Prostate gland (tissue), 2 donors: ENCODE measurements at regions of chr11 and their contacts with region 1.

Region 1: DNA sequence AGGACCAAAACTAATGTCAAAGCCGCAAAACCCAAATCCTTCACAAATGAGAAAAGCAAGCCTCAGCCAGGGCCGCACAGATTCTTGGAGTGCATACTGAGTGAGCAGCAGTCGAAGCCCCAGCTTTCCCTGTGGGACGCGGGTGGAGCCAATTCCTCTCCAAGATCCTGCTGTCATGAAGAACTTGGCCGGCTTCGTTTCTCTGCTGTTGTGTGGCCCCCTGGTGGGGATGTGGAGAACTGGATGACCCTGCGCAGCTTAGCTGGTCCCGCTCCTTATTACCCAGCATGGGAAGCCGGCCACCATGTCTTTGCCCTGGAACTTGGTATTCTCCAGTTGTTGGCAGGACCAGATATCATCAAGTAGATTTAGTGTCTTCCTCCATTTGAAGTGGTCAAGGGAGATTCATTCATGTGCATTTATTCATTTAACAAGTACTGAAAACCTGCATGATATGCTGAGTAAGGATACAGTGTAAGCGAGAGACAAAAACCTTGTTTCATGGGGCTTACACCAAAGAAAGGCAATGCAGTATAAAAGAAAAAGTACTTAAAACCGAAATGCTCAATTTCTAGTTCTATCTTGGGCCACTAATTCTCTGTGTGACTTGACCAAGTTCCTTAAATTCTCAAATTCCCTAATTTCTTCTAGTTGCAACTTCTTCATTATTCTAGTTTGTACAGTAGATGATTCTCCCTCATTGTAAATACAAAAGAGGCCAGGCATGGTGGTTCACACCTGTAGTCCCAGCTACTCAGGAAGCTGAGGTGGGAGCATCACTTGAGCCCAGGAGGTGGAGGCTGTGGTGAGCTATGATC is 56.7 kb upstream of the CRTAM start:
- DNase-seq: peak; percentile 81
- H3K4me3 ChIP-seq: no peak overlapping the region
- H3K27ac ChIP-seq: no peak overlapping the region
- H3K4me1 ChIP-seq: no peaks in the 10 kb centered on the region
- H3K27me3 ChIP-seq: no peaks in the 10 kb centered on the region
- CTCF ChIP-seq: peak; percentile 87 to 93 (median 90)
- POLR2A ChIP-seq: no peak

Region 2: DNA sequence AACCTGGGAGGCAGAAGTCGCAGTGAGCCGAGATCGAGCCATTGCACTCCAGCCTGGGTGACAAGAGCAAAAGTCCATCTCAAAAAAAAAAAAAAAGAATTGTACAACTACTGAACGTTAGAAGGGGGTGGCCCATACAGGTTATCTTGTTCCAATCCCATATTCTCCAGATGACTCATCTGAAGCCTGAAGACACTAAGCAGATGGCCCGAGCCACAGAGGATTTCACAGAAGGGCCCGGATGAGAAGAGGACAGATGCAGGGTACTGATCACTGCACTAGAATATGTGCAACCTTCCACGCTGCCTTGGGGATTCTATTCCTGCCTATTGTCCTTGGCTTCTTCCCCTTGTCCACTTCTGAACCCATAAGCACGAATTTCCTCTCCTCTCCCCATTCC is 196.9 kb before region 1 on chr11:
- intact Hi-C with region 1: loop called (anchors 5 kb)
- DNase-seq: no peak
- H3K4me3 ChIP-seq: no peak overlapping the region
- H3K27ac ChIP-seq: no peak overlapping the region
- H3K4me1 ChIP-seq: no peaks in the 10 kb centered on the region
- H3K27me3 ChIP-seq: no peaks in the 10 kb centered on the region
- CTCF ChIP-seq: no peak
- POLR2A ChIP-seq: no peak

Region 3: GRCh38 chr11:122633219-122633829 is 148.3 kb before region 1 on chr11:
- intact Hi-C with region 1: loop called (anchors 2 kb)
- DNase-seq: no peak
- H3K4me3 ChIP-seq: no peak overlapping the region
- H3K27ac ChIP-seq: no peak overlapping the region
- H3K4me1 ChIP-seq: no peaks in the 10 kb centered on the region
- H3K27me3 ChIP-seq: no peaks in the 10 kb centered on the region
- CTCF ChIP-seq: peak in 2 of 4 experiments; percentile 30 to 36
- POLR2A ChIP-seq: no peak

Region 4: GRCh38 chr11:122727101-122727929 is 54.3 kb before region 1 on chr11:
- intact Hi-C with region 1: no loop called
- DNase-seq: no peak
- H3K4me3 ChIP-seq: no peak overlapping the region
- H3K27ac ChIP-seq: no peak overlapping the region
- H3K4me1 ChIP-seq: no peaks in the 10 kb centered on the region
- H3K27me3 ChIP-seq: no peaks in the 10 kb centered on the region
- CTCF ChIP-seq: no peak
- POLR2A ChIP-seq: no peak

Region 5: GRCh38 chr11:122853971-122854446 is 72.4 kb after region 1 on chr11:
- intact Hi-C with region 1: loop called (anchors 10 kb)
- DNase-seq: peak; percentile 72
- H3K4me3 ChIP-seq: no peak overlapping the region
- H3K27ac ChIP-seq: no peak overlapping the region
- H3K4me1 ChIP-seq: no peaks in the 10 kb centered on the region
- H3K27me3 ChIP-seq: no peaks in the 10 kb centered on the region
- CTCF ChIP-seq: peak in 3 of 4 experiments; percentile 74 to 79 (median 74)
- POLR2A ChIP-seq: no peak